GM10248 (cell line): ENCODE measurements at regions of chrX and their contacts with region 1.

Region 1: GRCh38 chrX:149512225-149512885 is 7.2 kb upstream of the IDS start:
- DNase-seq: peak; percentile 46
- CTCF ChIP-seq: peak; percentile 45

Region 2: DNA sequence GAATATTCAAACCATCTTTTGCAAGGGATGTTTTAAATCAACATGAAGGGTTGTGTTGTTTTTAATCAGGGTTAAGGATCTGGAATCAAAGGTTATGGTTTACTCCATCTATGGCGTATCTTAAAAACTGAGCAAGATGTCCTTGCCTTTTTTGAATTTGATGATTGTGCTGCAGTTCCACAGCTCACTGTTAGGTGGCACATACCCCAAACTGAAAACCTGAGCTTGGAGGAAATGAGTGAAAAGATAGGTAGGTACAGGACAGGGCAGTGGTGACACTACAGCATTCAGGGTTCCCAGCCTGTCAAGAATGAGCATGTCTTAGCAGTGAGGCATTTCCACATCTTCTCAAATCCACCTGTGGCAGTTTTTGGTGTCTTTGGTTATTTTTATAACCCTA is 15.3 kb after region 1 on chrX:
- CTCF ChIA-PET with region 1: interaction called, 18 read pairs
- POLR2A ChIA-PET with region 1: no interaction called
- DNase-seq: no peak
- CTCF ChIP-seq: peak; percentile 47